PC-9 (cell line): ENCODE measurements at regions of chr5 and their contacts with region 1.

Region 1: DNA sequence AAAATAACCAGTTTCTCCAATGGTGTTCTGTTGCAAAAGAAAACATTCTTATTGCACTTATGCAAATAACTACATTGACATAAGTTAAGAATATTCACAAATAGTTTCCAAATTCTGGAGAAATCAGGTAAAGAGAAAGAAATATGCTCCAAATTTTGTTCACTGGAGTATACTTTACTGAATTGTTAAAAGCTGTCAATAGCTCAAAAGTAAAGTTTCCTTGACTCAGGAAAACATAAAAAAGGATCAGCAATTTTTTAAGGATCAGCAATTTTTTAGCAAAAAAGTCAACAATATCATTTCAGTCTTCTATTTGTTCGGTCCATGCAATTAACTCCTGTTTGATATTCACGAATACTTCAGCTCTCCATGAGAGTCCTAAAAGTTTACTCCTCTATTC is 51.6 kb downstream of the ANXA2R start:
- DNase-seq: no peak
- H3K4me3 ChIP-seq: no peak overlapping the region
- H3K27ac ChIP-seq: no peak overlapping the region
- H3K4me1 ChIP-seq: peaks cover 39% of the 10 kb centered on the region
- H3K27me3 ChIP-seq: no peaks in the 10 kb centered on the region
- CTCF ChIP-seq: no peak

Region 2: DNA sequence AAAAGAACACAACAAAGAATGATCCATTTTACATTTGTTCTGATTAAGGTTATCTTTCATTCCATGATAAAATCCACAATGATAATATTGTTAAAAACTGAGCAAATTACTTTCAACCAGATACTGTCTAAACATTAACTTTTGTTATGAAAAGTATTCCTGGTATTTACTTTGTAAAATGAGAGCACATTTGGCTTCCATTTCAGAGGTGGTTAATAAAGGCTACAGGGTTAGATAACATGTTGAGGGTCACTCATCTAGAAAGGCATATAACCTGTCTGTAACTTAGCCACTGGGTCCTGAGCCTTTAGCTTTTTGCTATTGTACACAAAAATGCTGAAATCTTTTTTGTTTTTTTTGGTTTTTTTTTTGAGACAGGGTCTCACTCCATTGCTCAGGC is 47.7 kb before region 1 on chr5:
- CTCF ChIA-PET with region 1: interaction called, 14 read pairs
- POLR2A ChIA-PET with region 1: interaction called, 5 read pairs
- intact Hi-C with region 1: no loop called
- DNase-seq: no peak
- H3K4me3 ChIP-seq: no peak overlapping the region
- H3K27ac ChIP-seq: no peak overlapping the region
- H3K4me1 ChIP-seq: peaks cover 22% of the 10 kb centered on the region
- H3K27me3 ChIP-seq: no peaks in the 10 kb centered on the region
- CTCF ChIP-seq: no peak

Region 3: DNA sequence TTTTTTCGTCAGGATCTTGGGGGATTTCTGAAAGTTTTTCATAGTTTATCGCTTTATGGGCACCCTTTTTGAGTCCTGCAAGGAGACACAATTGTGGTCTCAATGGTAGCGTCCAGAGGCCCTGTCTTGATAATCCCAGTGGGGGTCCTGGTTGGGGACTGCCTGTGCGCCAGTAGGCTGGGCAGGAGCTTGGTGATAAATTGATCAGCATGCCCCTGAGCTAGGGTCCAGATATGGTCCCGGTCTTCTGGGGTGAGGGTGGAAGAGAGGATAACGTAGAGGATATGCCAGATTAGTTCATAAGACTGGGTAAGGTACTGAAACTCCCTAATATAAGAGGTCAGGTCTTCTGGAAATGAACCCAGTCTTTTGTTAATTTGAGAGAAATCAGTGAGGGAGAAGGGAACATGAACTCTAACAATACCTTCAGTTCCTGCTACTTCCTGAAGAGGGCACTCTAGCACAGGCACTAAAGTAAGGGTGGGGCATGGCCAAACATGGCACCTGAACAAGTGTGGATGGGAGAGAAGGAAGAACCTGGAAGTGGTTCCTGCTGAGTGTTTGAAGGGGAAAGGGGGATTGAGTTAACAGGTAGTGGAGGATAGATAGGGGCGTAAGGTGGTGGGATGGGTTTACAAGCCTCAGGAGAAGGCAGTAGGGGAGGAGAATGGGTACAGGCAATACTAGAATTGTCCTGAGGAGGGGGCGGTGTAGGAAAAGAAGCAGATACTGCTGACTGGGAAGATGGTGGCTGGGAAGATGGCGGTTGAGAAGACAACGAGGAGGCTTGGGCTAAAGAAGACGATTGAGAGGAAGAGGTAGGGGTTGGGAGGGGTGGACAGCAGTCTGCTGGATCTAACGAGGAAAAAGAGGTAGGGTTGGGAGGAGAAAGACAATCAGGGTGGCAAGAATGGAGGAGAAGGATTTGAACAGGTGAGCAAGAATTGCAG is 85.3 kb after region 1 on chr5:
- CTCF ChIA-PET with region 1: no interaction called
- POLR2A ChIA-PET with region 1: no interaction called
- intact Hi-C with region 1: no loop called
- DNase-seq: peak in 1 of 2 experiments; percentile 55
- H3K4me3 ChIP-seq: no peak overlapping the region
- H3K27ac ChIP-seq: no peak overlapping the region
- H3K4me1 ChIP-seq: peaks cover 5% of the 10 kb centered on the region
- H3K27me3 ChIP-seq: no peaks in the 10 kb centered on the region
- CTCF ChIP-seq: peak; percentile 97

Region 4: DNA sequence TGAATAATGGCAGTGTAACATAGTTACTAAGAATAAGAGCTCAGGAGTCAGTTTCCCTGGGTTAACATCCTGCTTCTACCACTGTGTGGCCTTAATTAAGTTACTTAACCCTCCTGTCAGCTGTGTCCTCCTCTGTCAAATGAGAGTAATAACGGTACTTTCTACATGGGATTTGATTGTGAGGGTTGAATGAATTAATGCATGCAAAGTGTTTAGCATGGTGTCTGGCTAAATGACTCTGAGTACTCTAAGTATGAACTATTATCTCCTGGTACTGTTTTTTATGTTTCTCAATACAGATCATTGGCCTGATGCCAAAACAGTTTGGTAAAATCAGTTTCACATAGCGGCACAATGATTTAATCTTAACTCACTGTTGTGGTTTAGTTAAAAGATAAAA is 151.7 kb after region 1 on chr5:
- CTCF ChIA-PET with region 1: no interaction called
- POLR2A ChIA-PET with region 1: no interaction called
- intact Hi-C with region 1: no loop called
- DNase-seq: no peak
- H3K4me3 ChIP-seq: no peak overlapping the region
- H3K27ac ChIP-seq: no peak overlapping the region
- H3K4me1 ChIP-seq: no peaks in the 10 kb centered on the region
- H3K27me3 ChIP-seq: no peaks in the 10 kb centered on the region
- CTCF ChIP-seq: no peak

Region 5: GRCh38 chr5:43150748-43151147 is 162.2 kb after region 1 on chr5:
- CTCF ChIA-PET with region 1: no interaction called
- POLR2A ChIA-PET with region 1: no interaction called
- intact Hi-C with region 1: no loop called
- DNase-seq: no peak
- H3K4me3 ChIP-seq: no peak overlapping the region
- H3K27ac ChIP-seq: no peak overlapping the region
- H3K4me1 ChIP-seq: no peaks in the 10 kb centered on the region
- H3K27me3 ChIP-seq: no peaks in the 10 kb centered on the region
- CTCF ChIP-seq: no peak